Ovary (tissue), 10 donors: ENCODE measurements at regions of chr11 and their contacts with region 1.

Region 1: GRCh38 chr11:114439229-114440120 is at the start of gene REXO2:
- DNase-seq: peak; percentile 94 to 97 (median 95)
- H3K4me3 ChIP-seq: peak within 1 kb of the TSS; percentile 73
- H3K27ac ChIP-seq: peak within 1 kb of the TSS; percentile 69 to 93
- H3K4me1 ChIP-seq: peaks cover 9% of the 10 kb centered on the region
- H3K27me3 ChIP-seq: no peaks in the 10 kb centered on the region
- CTCF ChIP-seq: peak in 1 of 3 donors; percentile 41
- EP300 ChIP-seq: no peak
- POLR2A ChIP-seq: peak; percentile 82
- total RNA-seq, gene REXO2: 74.1 to 148 (median 96.0) TPM

Region 2: DNA sequence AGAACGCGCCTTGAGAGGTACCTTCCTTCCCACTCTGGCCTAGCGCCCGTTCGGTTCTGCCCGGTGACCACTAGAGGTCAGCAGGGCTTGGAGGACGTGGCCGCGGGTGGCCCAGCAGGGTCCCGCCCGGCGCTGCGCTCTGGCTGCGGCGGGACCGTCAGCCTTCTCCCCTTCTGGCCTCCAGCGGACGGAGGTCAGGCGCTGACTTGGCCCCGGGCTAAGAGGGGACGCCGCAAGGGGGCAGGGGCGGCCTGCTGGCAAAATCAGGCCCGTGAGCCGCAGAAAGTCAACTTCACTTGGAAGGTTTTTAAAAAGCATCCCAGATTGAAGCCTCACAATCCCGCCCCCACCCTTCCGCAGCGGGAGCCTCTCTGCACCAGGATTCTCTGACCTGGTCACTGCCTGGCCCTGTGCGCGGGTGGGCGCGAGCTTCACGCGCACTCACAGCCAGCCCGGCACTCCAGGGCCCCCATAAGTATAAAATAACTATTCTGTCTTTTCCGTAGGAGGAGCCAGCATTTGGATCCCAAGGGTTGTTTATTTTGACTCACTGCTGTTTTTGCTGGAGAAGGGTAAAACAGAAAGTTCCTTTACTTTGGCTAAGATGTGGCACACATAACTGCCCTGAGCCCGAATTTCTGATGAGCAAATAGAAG is 403.2 kb before region 1 on chr11:
- intact Hi-C with region 1: loop called in 1 of 4 experiments (anchors 5 kb)
- DNase-seq: peak; percentile 80 to 90 (median 84)
- H3K4me3 ChIP-seq: peak overlapping the region; percentile 40
- H3K27ac ChIP-seq: peak overlapping the region; percentile 54 to 71
- H3K4me1 ChIP-seq: peaks cover 1% of the 10 kb centered on the region
- H3K27me3 ChIP-seq: no peaks in the 10 kb centered on the region
- CTCF ChIP-seq: peak; percentile 75 to 88 (median 85)
- EP300 ChIP-seq: no peak
- POLR2A ChIP-seq: no peak

Region 3: DNA sequence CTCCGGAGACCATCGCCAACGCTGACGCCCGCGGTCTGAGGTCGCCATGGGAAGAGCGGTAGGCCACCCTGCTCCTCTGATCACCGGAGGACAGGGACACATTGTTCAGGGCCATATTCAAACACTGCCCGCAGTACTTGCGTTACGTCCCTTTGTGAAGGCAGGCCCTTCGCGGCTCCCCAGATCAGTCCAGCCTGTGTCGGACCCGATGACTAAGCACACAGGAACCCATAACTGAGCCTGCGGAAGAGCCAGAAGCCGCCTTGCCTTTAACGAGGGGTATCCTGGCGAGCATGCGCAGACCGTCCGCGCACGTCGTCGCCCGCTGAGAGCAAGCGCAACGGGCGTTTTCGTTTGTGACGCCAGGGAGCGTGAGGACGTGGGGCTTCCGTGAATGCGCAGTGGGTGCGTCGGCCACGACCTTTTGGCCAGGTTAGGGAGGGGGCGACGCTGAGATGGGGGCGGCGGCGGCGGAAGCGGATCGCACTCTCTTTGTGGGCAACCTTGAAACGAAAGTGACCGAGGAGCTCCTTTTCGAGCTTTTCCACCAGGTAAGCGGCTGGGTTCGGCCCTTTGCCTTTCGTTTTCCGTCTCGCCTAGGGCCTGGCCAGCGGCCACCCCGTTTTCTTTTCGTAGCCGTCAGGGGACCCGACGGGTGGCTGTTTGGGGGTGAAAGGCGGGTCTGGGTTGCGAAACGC is 39.1 kb before region 1 on chr11 and contains the starts of genes C11orf71 and RBM7:
- intact Hi-C with region 1: loop called in 1 of 4 experiments (anchors 2 kb)
- DNase-seq: peak; percentile 98 to 99 (median 99)
- H3K4me3 ChIP-seq: peak within 1 kb of the TSS; percentile 80
- H3K27ac ChIP-seq: peak within 1 kb of the TSS; percentile 95 to 100
- H3K4me1 ChIP-seq: peaks cover 4% of the 10 kb centered on the region
- H3K27me3 ChIP-seq: no peaks in the 10 kb centered on the region
- CTCF ChIP-seq: peak in 1 of 3 donors; percentile 42
- EP300 ChIP-seq: peak; percentile 16
- POLR2A ChIP-seq: peak; percentile 96
- total RNA-seq, gene C11orf71: 6.7 to 15.3 (median 9.5) TPM
- total RNA-seq, gene RBM7: 24.7 to 34.1 (median 28.3) TPM

Region 4: DNA sequence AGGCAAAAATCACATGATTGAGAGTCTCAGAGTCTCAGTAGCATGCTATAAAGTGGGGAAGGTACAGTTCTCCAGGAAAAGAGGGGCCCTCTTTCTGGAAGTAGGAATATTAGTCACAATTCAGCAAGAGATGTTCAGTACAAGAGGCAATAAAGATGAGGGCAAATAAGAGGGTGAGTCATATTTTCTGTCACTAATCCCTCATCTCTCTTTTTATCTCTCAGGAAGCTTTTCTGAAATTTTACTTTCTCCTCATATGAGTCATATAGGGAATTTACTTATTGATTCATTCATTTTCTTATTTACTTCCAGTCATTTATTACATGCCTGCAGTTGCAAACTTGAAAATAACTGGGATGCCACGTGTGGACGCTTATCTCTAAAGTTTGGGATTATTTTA is 123.6 kb after region 1 on chr11:
- intact Hi-C with region 1: no loop called
- DNase-seq: no peak
- H3K4me3 ChIP-seq: no peak overlapping the region
- H3K27ac ChIP-seq: no peak overlapping the region
- H3K4me1 ChIP-seq: no peaks in the 10 kb centered on the region
- H3K27me3 ChIP-seq: no peaks in the 10 kb centered on the region
- CTCF ChIP-seq: no peak
- EP300 ChIP-seq: no peak
- POLR2A ChIP-seq: no peak